ENCODE measurements at regions of chr16 and their contacts with region 1.

Region 1: GRCh38 chr16:72467157-72467759 is 295.3 kb upstream of the PMFBP1 start:
- DNase-seq: peak; percentile 60
- ATAC-seq: peak; percentile 79
- H3K4me3 ChIP-seq: no peak overlapping the region
- H3K27ac ChIP-seq: no peak overlapping the region
- H3K4me1 ChIP-seq: no peaks in the 10 kb centered on the region
- H3K27me3 ChIP-seq: no peaks in the 10 kb centered on the region
- CTCF ChIP-seq: peak; percentile 75
- POLR2A ChIP-seq: no peak
- RAD21 ChIP-seq: peak; percentile 73

Region 2: GRCh38 chr16:72236866-72237265 is 230.4 kb before region 1 on chr16:
- CTCF ChIA-PET with region 1: interaction called, 15 read pairs
- POLR2A ChIA-PET with region 1: interaction called, 9 read pairs
- dilution Hi-C with region 1: loop called (anchors 25 kb)
- in situ Hi-C with region 1: loop called (anchors 5 kb)
- intact Hi-C with region 1: loop called (anchors 1 kb)
- DNase-seq: no peak
- ATAC-seq: no peak
- H3K4me3 ChIP-seq: no peak overlapping the region
- H3K27ac ChIP-seq: no peak overlapping the region
- H3K4me1 ChIP-seq: no peaks in the 10 kb centered on the region
- H3K27me3 ChIP-seq: no peaks in the 10 kb centered on the region
- CTCF ChIP-seq: no peak
- POLR2A ChIP-seq: no peak
- RAD21 ChIP-seq: no peak

Region 3: GRCh38 chr16:72400257-72400882 is 66.9 kb before region 1 on chr16:
- CTCF ChIA-PET with region 1: interaction called, 5 read pairs
- POLR2A ChIA-PET with region 1: no interaction called
- dilution Hi-C with region 1: no loop called
- in situ Hi-C with region 1: no loop called
- intact Hi-C with region 1: loop called (anchors 2 kb)
- DNase-seq: peak; percentile 62
- ATAC-seq: peak; percentile 91
- H3K4me3 ChIP-seq: no peak overlapping the region
- H3K27ac ChIP-seq: no peak overlapping the region
- H3K4me1 ChIP-seq: no peaks in the 10 kb centered on the region; the same call in 1 of the 2 replicates
- H3K27me3 ChIP-seq: no peaks in the 10 kb centered on the region
- CTCF ChIP-seq: peak; percentile 66
- POLR2A ChIP-seq: no peak
- RAD21 ChIP-seq: peak; percentile 54

Region 4: GRCh38 chr16:74034862-74035261 is 1567.6 kb after region 1 on chr16:
- CTCF ChIA-PET with region 1: no interaction called
- POLR2A ChIA-PET with region 1: no interaction called
- dilution Hi-C with region 1: no loop called
- in situ Hi-C with region 1: no loop called
- intact Hi-C with region 1: loop called (anchors 10 kb)
- DNase-seq: peak; percentile 11
- ATAC-seq: peak; percentile 56; the same call in 1 of the 2 replicates
- H3K4me3 ChIP-seq: no peak overlapping the region
- H3K27ac ChIP-seq: no peak overlapping the region
- H3K4me1 ChIP-seq: no peaks in the 10 kb centered on the region
- H3K27me3 ChIP-seq: no peaks in the 10 kb centered on the region; the same call in 1 of the 2 replicates
- CTCF ChIP-seq: 0 out of 2 replicates have a peak, but pooled peaks have one; percentile 29
- POLR2A ChIP-seq: no peak
- RAD21 ChIP-seq: peak; percentile 37

Measured in IMR-90 (cell line).